ENCODE measurements at regions of chr7 and their contacts with region 1.

Region 1: DNA sequence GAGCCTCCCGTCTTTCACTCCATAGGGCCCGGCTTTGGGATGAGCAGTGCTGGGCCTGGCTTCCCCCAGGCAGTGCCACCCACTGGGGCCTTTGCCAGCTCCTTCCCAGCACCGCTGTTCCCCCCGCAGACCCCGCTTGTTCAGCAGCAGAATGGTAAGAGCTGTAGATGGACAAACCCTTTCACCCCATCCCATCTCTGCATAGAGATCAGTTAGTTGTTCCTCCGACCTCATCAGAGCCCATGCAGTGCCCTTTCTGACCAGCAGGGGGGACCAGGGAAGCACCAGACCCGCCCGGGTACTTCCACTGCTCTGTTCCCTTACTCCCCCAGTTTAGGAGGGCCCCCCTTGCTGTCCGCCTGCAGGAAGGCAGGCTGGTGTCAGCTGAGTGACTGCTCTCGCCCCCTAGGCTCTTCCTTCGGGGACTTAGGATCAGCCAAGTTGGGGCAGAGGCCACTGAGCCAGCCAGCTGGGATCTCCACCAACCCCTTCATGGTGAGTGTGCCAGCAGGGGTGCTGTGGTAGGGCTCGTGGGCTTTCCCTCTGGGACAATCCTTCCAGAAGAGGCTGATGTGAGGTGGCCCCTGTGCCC is 9.8 kb downstream of the SAP25 start:
- DNase-seq: peak; percentile 90
- ATAC-seq: peak; percentile 69

Region 2: GRCh38 chr7:100015232-100016209 is 548.4 kb before region 1 on chr7 and contains the start of gene ZKSCAN1:
- intact Hi-C with region 1: no loop called
- DNase-seq: peak; percentile 93
- ATAC-seq: peak; percentile 99
- total RNA-seq, gene ZKSCAN1: 30.3 TPM

Region 3: DNA sequence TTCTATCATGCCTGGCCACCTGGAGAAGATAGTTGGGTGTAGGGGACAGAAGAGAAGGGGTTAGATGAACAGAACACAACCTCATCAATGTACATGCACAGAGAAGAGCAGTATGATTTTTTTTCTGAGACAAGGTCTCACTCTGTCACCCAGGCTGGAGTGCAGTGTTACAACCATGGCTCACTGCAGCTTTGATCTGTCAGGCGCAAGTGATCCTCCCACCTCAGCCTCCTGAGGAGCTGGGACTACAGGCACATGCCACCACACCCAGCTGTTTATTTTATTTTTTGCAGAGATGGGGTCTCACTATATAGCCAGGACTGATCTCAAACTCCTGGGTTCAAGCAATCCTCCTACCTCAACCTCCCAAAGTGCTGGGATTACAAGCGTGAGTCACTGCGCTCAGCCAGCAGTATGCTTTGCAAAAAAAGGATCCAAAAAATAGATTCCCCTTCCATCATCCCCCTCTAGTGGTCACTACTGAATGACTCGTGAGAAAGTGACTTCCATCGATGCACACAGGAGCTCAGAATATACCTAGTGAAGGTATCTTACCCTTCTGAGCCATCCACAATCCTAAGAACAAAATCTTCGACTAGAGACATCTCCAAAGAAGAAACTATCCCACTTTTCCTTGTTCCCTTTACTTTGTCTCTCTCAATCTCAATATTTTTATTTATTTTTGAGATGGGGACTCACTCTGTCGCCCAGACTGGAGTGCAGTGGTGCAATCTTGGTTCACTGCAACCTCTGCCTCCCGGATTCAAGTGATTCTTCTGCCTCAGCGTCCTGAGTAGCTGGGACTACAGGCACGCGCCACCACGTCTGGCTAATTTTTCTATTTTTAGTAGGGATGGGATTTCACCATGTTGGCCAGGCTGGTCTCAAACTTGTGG is 156.4 kb before region 1 on chr7:
- intact Hi-C with region 1: no loop called
- DNase-seq: no peak
- ATAC-seq: peak; percentile 70

Region 4: GRCh38 chr7:100719523-100720319 is 155.8 kb after region 1 on chr7:
- intact Hi-C with region 1: loop called (anchors 10 kb)
- DNase-seq: no peak
- ATAC-seq: no peak

Measured in Right ventricle myocardium superior (tissue), 1 donor.